ENCODE measurements at regions of chr6 and their contacts with region 1.

Region 1: DNA sequence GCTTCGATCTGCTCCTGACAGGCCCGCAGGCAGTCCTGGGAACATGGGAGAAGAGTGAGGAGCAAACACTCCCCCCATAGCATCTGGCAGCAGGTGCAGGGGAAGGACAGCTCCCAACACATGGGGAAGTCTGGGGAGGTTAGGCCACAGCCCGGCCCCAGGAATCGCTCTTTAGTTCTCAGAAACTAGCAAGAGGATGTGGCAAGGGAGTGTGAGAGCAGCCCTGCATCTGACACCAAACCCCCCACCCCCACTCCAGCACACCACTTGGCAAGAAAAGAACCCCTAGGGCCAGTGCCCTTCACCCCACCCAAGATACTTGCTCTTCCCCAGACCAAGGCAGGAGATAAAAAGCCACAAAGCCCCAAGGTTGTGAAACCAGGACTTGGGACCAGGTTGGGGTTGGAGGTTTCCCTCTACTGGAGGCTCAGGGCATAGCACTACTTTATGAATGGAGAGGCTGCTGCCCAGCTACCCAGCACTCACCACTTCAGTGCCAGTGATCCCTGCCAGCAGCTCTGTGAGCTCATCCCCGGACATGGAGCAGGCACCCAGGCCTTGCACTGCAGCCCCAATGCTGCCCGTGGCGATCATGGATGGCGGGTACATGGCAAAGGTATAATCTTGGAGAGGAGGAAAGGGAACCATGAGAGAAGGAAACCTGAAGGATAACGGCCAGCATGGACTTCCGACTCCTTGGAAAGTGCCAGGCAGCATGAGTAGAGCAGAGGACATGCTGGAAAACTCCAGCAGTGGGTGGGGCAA is 5.4 kb downstream of the CCND3 start:
- DNase-seq: peak; percentile 68 to 92
- ATAC-seq: peak; percentile 82 to 93 (median 89)
- H3K4me3 ChIP-seq: peak overlapping the region; percentile 10
- H3K4me3 Mint-ChIP-seq: peak overlapping the region; percentile 97
- H3K27ac ChIP-seq: peak overlapping the region; percentile 57
- H3K27ac Mint-ChIP-seq: peak overlapping the region; percentile 88 to 95
- H3K4me1 ChIP-seq: peaks cover 86% of the 10 kb centered on the region
- H3K4me1 Mint-ChIP-seq: peaks cover 80 to 89% of the 10 kb centered on the region in 2 donors
- H3K27me3 ChIP-seq: no peaks in the 10 kb centered on the region
- H3K27me3 Mint-ChIP-seq: no peaks in the 10 kb centered on the region
- CTCF ChIP-seq: peak; percentile 65

Region 2: DNA sequence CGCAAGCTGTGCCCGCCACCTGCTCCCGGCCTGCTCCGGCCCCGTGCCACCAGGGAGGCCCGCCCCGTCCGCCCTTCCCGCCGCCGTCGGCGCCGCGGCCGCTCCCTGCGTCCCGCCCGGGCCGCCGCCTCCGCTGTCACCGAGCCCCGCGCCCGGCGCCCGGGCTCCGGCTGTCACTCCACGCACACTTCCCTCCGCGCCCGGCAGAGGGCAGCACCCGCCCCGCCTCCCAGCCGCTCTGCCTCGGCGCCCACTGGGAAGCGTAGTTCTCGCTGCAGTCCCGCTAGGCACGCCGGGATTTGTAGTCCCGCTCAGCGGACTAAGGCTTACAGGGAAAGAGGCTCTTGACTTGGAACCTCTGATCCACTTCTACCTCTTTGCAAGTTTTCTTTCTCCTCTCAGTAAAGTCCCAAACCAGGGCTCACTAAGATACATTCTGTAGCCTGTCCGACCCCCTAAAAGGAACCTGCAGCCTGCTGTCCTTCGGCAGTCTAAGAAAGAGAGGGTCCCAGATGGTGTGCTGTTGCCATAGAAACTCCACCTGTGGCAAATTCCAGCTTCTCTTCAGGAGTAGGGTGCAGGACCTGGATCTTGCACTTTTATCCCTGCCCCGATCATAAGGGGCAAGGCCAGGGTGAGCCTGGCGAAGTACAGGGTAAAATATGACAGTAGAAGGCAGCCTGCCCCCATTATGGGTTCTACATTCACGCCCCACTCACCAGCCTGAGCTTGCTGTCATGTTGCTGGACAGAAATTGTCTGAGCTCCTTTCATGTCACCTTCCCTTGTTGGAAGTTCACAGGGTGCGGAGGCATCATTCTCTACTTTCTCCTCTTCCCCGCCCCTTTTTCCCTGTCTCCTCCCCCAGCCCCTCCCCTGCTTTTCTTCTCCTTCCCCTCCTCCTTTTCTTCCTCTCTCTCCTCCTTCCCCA is 200.6 kb before region 1 on chr6 and contains the start of gene TFEB:
- intact Hi-C with region 1: loop called (anchors 5 kb)
- DNase-seq: peak; percentile 96
- ATAC-seq: peak; percentile 50 to 79 (median 63)
- H3K4me3 ChIP-seq: peak within 1 kb of the TSS; percentile 74
- H3K4me3 Mint-ChIP-seq: peak within 1 kb of the TSS; percentile 81
- H3K27ac ChIP-seq: peak within 1 kb of the TSS; percentile 89
- H3K27ac Mint-ChIP-seq: peak within 1 kb of the TSS; percentile 88 to 95
- H3K4me1 ChIP-seq: peaks cover 38% of the 10 kb centered on the region
- H3K4me1 Mint-ChIP-seq: peaks cover 23 to 30% of the 10 kb centered on the region in 2 donors
- H3K27me3 ChIP-seq: no peaks in the 10 kb centered on the region
- H3K27me3 Mint-ChIP-seq: no peaks in the 10 kb centered on the region
- CTCF ChIP-seq: peak; percentile 72
- total RNA-seq, gene TFEB: 56.0 to 66.7 (median 66.2) TPM

Region 3: DNA sequence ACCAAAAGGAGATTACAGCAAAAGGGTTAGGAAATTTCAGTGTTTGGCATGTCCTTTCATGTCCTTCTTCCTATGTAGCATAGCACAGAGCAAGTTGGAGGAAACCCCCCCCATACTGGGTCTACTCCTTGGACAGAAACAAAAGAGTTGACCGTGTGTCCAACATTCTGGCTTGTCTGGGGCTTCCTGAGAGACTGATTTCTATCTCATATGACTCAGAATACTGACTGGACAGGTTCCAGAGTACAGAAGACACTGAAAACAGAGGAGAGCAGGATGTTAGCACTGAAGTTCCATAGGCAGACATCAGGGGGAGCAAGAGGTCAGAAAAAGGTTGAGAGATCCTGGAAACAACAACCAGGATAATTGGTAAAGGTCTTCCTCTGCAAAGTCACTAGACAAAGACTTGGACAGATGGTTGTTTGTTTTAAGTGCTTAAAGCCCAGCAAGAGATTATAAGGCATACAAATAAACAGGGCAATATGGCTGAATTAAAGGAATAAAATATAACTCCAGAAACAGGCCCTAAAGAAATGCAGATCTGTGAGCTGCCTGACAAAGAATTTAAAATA is 89.5 kb before region 1 on chr6:
- intact Hi-C with region 1: loop called (anchors 1 kb)
- DNase-seq: peak; percentile 27 to 78
- ATAC-seq: peak; percentile 63 to 84 (median 74)
- H3K4me3 ChIP-seq: no peak overlapping the region
- H3K4me3 Mint-ChIP-seq: no peak overlapping the region
- H3K27ac ChIP-seq: no peak overlapping the region
- H3K27ac Mint-ChIP-seq: no peak overlapping the region
- H3K4me1 ChIP-seq: no peaks in the 10 kb centered on the region
- H3K4me1 Mint-ChIP-seq: peaks cover 6 to 12% of the 10 kb centered on the region in 2 donors
- H3K27me3 ChIP-seq: no peaks in the 10 kb centered on the region
- H3K27me3 Mint-ChIP-seq: no peaks in the 10 kb centered on the region
- CTCF ChIP-seq: peak; percentile 71

Region 4: DNA sequence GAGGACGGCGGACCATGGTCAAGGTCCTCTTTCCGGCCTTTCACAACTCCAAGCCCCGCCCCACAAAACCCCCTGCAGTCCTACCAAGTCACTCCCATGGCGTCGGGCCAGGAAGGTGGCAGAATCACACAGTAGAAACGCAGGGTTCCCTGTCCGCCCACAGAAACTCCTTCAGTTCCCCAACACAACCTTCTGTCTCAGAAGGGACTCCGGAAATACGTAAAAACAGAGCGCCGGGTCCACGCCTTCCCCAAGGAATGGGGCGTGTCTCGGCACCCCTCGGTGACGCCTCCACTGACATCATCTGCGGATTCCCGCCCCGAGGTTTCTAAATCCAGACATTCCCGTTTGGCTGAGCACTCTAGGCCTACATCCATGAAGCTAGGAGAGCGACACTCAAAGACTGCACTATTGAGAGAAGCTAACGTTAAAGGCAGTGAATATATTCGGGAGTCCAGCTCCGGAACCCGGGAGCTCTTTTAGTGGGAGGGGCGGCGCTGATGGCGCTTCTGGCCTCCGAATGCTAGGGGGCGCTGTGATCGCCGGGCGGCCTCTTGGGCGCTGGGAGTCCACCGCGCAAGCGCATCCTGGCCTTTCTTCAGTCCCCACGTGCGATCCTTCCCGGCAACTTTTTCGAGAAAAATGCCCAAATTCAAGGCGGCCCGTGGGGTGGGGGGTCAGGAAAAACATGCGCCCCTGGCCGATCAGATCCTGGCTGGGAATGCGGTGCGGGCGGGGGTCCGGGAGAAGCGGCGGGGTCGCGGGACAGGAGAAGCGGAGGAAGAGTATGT is 15.1 kb before region 1 on chr6 and contains the starts of genes BYSL and MED20:
- intact Hi-C with region 1: loop called (anchors 1 kb)
- DNase-seq: peak; percentile 96 to 97
- ATAC-seq: peak; percentile 90 to 95 (median 92)
- H3K4me3 ChIP-seq: peak within 1 kb of the TSS; percentile 94
- H3K4me3 Mint-ChIP-seq: peak within 1 kb of the TSS; percentile 96
- H3K27ac ChIP-seq: peak within 1 kb of the TSS; percentile 96
- H3K27ac Mint-ChIP-seq: peak within 1 kb of the TSS; percentile 98
- H3K4me1 ChIP-seq: peaks cover 33% of the 10 kb centered on the region
- H3K4me1 Mint-ChIP-seq: peaks cover 57 to 60% of the 10 kb centered on the region in 2 donors
- H3K27me3 ChIP-seq: no peaks in the 10 kb centered on the region
- H3K27me3 Mint-ChIP-seq: no peaks in the 10 kb centered on the region
- CTCF ChIP-seq: peak; percentile 91
- total RNA-seq, gene BYSL: 5.4 to 11.6 (median 5.7) TPM
- total RNA-seq, gene MED20: 6.4 to 15.2 (median 15.0) TPM

Region 5: GRCh38 chr6:42043787-42044475 is 107.7 kb after region 1 on chr6:
- intact Hi-C with region 1: loop called (anchors 1 kb)
- DNase-seq: peak; percentile 93 to 95
- ATAC-seq: peak; percentile 64 to 82 (median 68)
- H3K4me3 ChIP-seq: peak overlapping the region; percentile 11
- H3K4me3 Mint-ChIP-seq: peak overlapping the region; percentile 91
- H3K27ac ChIP-seq: peak overlapping the region; percentile 57
- H3K27ac Mint-ChIP-seq: peak overlapping the region; percentile 87 to 97
- H3K4me1 ChIP-seq: peaks cover 86% of the 10 kb centered on the region
- H3K4me1 Mint-ChIP-seq: peaks cover 84 to 93% of the 10 kb centered on the region in 2 donors
- H3K27me3 ChIP-seq: no peaks in the 10 kb centered on the region
- H3K27me3 Mint-ChIP-seq: no peaks in the 10 kb centered on the region
- CTCF ChIP-seq: peak; percentile 91

Measured in natural killer cell (primary cell).